Left cardiac atrium (tissue), 4 donors: ENCODE measurements at regions of chr11 and their contacts with region 1.

Region 1: GRCh38 chr11:122439911-122440810 is 215.4 kb upstream of the UBASH3B start:
- DNase-seq: peak; percentile 65
- ATAC-seq: peak; percentile 82 to 83

Region 2: GRCh38 chr11:122229481-122230384 is 210.4 kb before region 1 on chr11:
- intact Hi-C with region 1: no loop called
- DNase-seq: no peak
- ATAC-seq: peak; percentile 30 to 57

Region 3: GRCh38 chr11:122309262-122309925 is 130.8 kb before region 1 on chr11:
- intact Hi-C with region 1: loop called in 1 of 2 experiments (anchors 5 kb)
- DNase-seq: peak; percentile 22
- ATAC-seq: peak; percentile 80 to 89

Region 4: GRCh38 chr11:122345586-122345985 is 94.6 kb before region 1 on chr11:
- intact Hi-C with region 1: loop called in 1 of 2 experiments (anchors 5 kb)
- DNase-seq: no peak
- ATAC-seq: no peak

Region 5: GRCh38 chr11:122418032-122418431 is 22.1 kb before region 1 on chr11:
- intact Hi-C with region 1: no loop called
- DNase-seq: no peak
- ATAC-seq: no peak

Region 6: DNA sequence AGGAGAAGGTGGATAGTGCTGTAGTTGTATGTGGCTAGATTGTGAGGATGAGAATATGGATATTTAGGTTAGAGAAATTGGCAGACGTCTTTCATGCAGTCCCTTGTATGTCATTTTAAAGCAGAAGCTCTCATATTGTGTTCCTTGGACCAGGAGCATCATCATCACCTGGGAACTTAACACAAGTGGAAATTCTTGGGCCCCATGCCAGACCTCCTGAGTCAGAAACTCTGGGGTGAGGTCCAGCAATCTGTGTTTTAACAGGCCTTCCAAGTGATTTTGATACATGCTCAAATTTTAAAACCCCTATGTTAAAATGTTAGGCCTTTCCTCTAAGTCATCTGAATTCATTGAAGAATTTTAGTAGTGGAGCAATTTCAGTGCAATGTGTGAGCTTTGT is 477.1 kb after region 1 on chr11:
- intact Hi-C with region 1: no loop called
- DNase-seq: peak; percentile 29
- ATAC-seq: peak in 1 of 2 donors; percentile 41